Colonic mucosa (tissue), 4 donors: ENCODE measurements at regions of chr18 and their contacts with region 1.

Region 1: GRCh38 chr18:62571648-62572047 is 48.8 kb downstream of the ZCCHC2 start:
- DNase-seq: no peak
- H3K4me3 ChIP-seq: no peak overlapping the region
- H3K27ac ChIP-seq: no peak overlapping the region
- H3K4me1 ChIP-seq: no peaks in the 10 kb centered on the region
- H3K27me3 ChIP-seq: no peaks in the 10 kb centered on the region
- CTCF ChIP-seq: no peak

Region 2: GRCh38 chr18:62537946-62538345 is 33.7 kb before region 1 on chr18:
- intact Hi-C with region 1: loop called (anchors 5 kb)
- DNase-seq: no peak
- H3K4me3 ChIP-seq: no peak overlapping the region
- H3K27ac ChIP-seq: no peak overlapping the region
- H3K4me1 ChIP-seq: no peaks in the 10 kb centered on the region
- H3K27me3 ChIP-seq: no peaks in the 10 kb centered on the region
- CTCF ChIP-seq: no peak

Region 3: DNA sequence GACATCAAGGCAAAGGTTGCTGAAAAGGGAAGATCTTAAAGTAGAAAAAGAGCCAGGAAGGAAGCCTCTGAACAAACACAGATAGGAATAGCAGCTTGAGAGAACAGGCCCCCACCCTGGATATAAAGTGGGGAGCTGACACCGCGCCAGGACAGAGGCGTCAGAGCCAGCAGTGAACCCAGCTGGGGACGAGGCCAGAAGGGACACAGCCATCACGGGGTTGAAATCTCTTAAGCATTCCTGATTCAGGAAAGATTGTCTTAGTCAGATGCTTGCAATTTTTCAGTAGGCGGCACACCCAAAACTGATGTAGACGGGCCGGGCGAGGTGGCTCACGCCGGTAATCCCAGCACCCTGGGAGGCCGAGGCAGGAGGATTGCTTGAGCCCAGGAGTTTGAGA is 49.9 kb after region 1 on chr18:
- intact Hi-C with region 1: no loop called
- DNase-seq: no peak
- H3K4me3 ChIP-seq: no peak overlapping the region
- H3K27ac ChIP-seq: no peak overlapping the region
- H3K4me1 ChIP-seq: no peaks in the 10 kb centered on the region
- H3K27me3 ChIP-seq: no peaks in the 10 kb centered on the region
- CTCF ChIP-seq: no peak

Region 4: DNA sequence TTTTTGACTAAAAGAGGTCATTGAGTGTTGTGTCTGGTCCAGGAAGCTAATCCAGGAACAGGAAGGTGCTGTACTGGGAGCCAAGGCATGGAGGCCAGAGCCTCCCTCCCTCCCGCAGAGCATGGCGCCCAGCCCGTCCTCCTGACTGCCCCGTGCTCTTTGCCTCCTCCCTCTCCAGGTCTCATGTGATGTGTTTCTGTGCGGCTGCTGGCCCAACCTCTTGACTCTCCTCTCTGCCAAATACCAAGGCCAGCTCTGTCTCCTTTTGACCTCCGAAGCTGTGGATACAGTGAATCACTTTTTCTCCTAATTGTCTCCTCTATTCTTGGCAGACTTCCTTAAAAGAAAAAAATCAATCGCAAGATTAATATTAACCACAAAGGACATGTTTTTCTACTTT is 427.7 kb after region 1 on chr18:
- intact Hi-C with region 1: no loop called
- DNase-seq: peak; percentile 38
- H3K4me3 ChIP-seq: no peak overlapping the region
- H3K27ac ChIP-seq: no peak overlapping the region
- H3K4me1 ChIP-seq: no peaks in the 10 kb centered on the region
- H3K27me3 ChIP-seq: no peaks in the 10 kb centered on the region
- CTCF ChIP-seq: no peak